Esophagus squamous epithelium (tissue), 5 donors: ENCODE measurements at regions of chr3 and their contacts with region 1.

Region 1: GRCh38 chr3:149969940-149970715 is 567 bp downstream of the PFN2 start:
- DNase-seq: peak; percentile 5
- H3K4me3 ChIP-seq: peak overlapping the region; percentile 60 to 97 (median 82)
- H3K27ac ChIP-seq: peak overlapping the region; percentile 81 to 92 (median 90)
- H3K4me1 ChIP-seq: peaks cover 0 to 50% (median 0%) of the 10 kb centered on the region in 3 donors
- H3K27me3 ChIP-seq: peaks cover 0 to 13% (median 0%) of the 10 kb centered on the region in 4 donors
- CTCF ChIP-seq: no peak
- POLR2A ChIP-seq: peak in 1 of 4 donors; percentile 19

Region 2: DNA sequence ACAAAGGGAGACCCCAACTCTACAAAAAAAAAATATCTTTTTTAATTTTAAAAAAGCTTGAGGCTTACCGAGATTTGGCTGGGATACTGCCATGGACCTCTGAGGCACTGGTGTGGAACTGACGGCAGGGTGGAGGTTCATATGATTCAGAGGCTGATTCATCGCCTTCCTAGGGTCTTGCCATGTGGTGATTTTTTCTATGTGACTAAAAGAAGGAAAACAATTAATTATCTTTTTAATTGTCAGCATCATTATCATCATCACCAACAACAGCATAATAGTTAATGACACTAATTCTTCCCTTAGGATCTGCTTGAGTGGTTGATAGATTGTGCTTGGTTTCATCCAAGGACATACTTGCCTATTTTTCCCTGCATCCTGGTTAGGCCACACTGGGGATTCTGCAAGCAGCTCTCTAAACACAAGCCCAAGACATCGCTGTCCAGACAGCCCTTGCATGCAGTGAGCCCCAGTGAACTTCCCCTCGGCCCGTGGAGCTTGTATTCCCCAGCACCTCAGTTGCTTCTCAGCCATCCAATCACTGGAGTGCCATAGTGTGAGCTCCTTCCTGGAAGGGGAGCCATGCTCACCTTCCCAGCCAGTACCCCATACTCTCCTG is 397.2 kb before region 1 on chr3:
- intact Hi-C with region 1: no loop called
- DNase-seq: no peak
- H3K4me3 ChIP-seq: no peak overlapping the region
- H3K27ac ChIP-seq: peak overlapping the region in 3 of 4 donors; percentile 59 to 81 (median 76)
- H3K4me1 ChIP-seq: peaks cover 21 to 79% (median 54%) of the 10 kb centered on the region in 3 donors
- H3K27me3 ChIP-seq: no peaks in the 10 kb centered on the region
- CTCF ChIP-seq: no peak
- POLR2A ChIP-seq: no peak

Region 3: GRCh38 chr3:150183678-150184425 is 213.7 kb after region 1 on chr3:
- intact Hi-C with region 1: loop called (anchors 10 kb)
- DNase-seq: no peak
- H3K4me3 ChIP-seq: peak overlapping the region in 3 of 4 donors; percentile 34 to 52 (median 34)
- H3K27ac ChIP-seq: no peak overlapping the region
- H3K4me1 ChIP-seq: peaks cover 0 to 11% (median 0%) of the 10 kb centered on the region in 3 donors
- H3K27me3 ChIP-seq: peaks cover 0 to 6% (median 0%) of the 10 kb centered on the region in 4 donors
- CTCF ChIP-seq: peak in 5 of 6 experiments; percentile 25 to 50 (median 43)
- POLR2A ChIP-seq: no peak

Region 4: DNA sequence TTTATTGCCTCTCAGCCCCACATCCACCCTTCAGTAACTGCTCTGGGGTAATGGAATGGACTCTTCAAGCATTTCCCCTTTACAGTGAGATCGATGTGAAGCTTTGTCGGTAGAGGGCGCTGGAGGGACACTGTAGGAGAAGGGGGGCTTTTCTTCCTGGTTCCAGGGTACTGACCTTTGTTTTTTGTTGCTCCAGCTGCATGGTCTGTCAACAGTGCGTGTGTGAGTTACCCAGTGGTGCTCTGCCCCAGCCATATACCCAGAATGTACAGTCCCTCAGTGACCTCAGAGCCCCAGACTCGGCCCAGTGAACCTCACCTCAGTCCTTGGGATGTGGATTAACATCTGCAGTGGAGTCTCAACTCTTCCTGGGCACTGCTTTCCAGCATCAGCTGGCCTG is 257.7 kb after region 1 on chr3:
- intact Hi-C with region 1: loop called (anchors 10 kb)
- DNase-seq: no peak
- H3K4me3 ChIP-seq: no peak overlapping the region
- H3K27ac ChIP-seq: no peak overlapping the region
- H3K4me1 ChIP-seq: peaks cover 0 to 4% (median 2%) of the 10 kb centered on the region in 3 donors
- H3K27me3 ChIP-seq: peaks cover 0 to 13% (median 0%) of the 10 kb centered on the region in 4 donors
- CTCF ChIP-seq: peak in 4 of 6 experiments; percentile 32 to 55 (median 42)
- POLR2A ChIP-seq: no peak